ENCODE measurements at regions of chr15 and their contacts with region 1.

Region 1: DNA sequence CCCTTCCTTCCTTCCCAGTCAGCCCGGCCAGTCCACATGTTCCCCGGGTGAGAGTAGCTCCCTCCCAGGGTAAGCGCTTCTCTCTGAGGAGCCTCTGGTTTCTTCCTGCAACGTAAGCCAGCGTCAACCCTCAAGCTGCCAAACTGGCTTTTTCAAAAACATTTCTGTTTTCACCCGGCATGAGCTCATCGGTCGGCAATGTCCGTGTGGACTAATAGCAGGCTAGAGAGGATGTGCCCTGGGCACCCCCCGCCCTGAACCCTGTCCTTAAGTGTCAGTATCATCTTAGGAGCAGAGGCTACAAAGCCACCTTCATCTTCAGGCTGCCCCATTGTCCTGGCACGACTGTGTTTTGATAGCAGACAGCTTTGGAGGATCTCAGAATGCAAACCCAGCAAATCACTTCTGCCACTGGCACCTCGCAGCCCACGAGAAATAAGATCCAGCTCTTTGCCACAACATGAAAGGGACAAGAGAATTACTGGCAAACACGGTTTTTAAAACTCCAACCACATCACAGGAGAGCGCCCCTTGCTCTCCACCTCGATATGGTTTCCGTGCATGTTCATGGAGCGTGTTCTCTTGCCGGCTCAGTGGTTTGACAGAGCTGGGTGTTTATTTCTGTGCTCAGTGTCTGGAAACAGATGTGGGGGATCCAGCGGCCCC is 9.9 kb downstream of the ALDH1A3 start:
- DNase-seq: peak; percentile 63 to 80
- H3K4me3 ChIP-seq: peak overlapping the region in 2 of 3 donors; percentile 10 to 48
- H3K27ac ChIP-seq: peak overlapping the region; percentile 60 to 72
- H3K4me1 ChIP-seq: no peaks in the 10 kb centered on the region
- H3K27me3 ChIP-seq: no peaks in the 10 kb centered on the region
- CTCF ChIP-seq: no peak
- POLR2A ChIP-seq: no peak

Region 2: DNA sequence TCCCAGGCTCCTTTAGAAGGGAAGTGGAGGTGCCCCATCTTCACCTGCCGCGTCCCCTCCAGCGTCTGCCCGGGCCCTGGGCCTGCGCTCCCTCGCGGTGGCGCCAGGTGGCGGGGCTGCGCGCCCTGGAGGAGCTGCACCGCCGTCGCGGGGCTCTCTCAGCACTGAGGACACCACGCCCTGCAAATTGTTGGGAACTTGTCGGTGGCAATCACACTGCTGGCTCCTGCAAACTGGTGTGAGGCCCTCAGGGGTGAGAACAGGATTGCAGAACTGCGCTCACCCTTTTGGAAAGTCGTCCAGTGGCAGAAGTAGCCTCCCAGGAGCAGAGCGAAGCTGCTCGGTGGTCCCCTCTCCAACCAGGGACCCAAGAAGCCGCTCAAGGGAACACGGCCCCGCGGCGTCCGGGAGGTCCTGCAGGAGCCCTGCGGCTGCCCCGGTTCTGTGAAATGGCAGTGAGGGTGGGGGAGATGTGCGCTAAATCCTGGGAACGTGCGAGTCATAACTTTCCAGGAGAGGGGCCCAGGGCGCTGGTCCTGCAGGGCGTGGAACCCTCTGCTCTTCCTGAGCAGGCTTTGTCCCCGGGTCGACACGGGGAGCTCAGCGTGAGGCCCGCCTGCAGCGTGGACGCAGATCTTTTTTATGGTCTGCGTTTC is 28.6 kb after region 1 on chr15:
- intact Hi-C with region 1: loop called (anchors 1 kb)
- DNase-seq: peak; percentile 67 to 76
- H3K4me3 ChIP-seq: peak overlapping the region; percentile 75 to 96 (median 82)
- H3K27ac ChIP-seq: peak overlapping the region; percentile 77 to 85
- H3K4me1 ChIP-seq: peaks cover 0 to 5% of the 10 kb centered on the region in 2 donors
- H3K27me3 ChIP-seq: no peaks in the 10 kb centered on the region
- CTCF ChIP-seq: peak; percentile 75 to 92 (median 88)
- POLR2A ChIP-seq: no peak

Region 3: GRCh38 chr15:101489236-101489632 is 599.7 kb after region 1 on chr15:
- intact Hi-C with region 1: no loop called
- DNase-seq: no peak
- H3K4me3 ChIP-seq: peak overlapping the region; percentile 20 to 67 (median 46)
- H3K27ac ChIP-seq: no peak overlapping the region
- H3K4me1 ChIP-seq: no peaks in the 10 kb centered on the region
- H3K27me3 ChIP-seq: peaks cover 4 to 14% of the 10 kb centered on the region in 2 donors
- CTCF ChIP-seq: no peak
- POLR2A ChIP-seq: no peak

Measured in breast epithelium (tissue), 4 donors.